Dendritic cell treated with granulocyte-macrophage colony-stimulating factor and Interleukin-4, amounts not matched to agents 40 ng/mL and 50 ng/mL, for 4 days (primary cell): ENCODE measurements at regions of chr10 and their contacts with region 1.

Region 1: GRCh38 chr10:96524741-96525140 is 11.0 kb upstream of the TLL2 start:
- H3K4me3 Mint-ChIP-seq: no peak overlapping the region
- H3K27ac Mint-ChIP-seq: no peak overlapping the region
- H3K4me1 Mint-ChIP-seq: no peaks in the 10 kb centered on the region
- H3K27me3 Mint-ChIP-seq: no peaks in the 10 kb centered on the region

Region 2: DNA sequence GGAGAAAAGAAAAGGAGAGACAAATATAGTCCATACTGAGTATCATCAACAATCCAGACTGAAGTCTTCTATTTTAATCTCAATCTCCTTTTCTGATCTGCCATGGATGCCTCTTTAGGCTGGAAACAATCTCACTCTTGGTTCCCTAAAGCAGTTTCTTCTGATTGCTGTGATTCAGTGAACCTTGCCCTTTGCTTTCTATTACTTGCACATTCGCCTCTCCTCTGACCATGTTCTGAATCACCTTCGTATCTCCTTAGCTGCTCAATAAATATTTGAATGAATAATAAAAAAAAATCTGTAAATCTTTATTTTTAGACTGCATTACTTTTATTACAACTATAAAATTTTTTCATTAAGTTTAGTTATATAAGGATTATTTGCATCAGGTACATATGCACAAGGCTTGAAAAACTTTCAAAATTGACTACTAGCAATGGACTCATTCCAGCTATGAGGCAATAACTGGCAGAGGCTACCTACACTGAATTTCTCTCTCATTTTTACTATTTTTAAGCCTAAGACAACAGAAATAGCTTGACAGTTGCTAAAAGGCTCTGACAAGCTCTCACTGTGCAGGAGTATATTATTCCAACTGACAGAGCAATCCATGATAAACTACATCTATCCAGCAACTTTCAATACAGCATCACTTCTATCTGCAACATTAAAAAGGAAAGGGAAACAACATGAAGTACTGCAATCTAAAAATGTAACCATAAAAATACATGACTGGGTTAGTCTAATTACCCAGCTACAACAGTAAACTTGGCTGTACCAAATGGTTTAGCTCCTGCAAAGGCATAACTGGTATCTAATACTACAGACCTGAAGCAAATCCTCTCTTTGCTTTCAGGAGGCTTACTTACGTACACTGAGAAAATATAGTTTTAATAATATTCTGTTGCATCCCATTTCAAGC is 36.5 kb after region 1 on chr10:
- intact Hi-C with region 1: loop called (anchors 5 kb)
- H3K4me3 Mint-ChIP-seq: no peak overlapping the region
- H3K27ac Mint-ChIP-seq: no peak overlapping the region
- H3K4me1 Mint-ChIP-seq: peaks cover under 1% of the 10 kb centered on the region
- H3K27me3 Mint-ChIP-seq: no peaks in the 10 kb centered on the region